CD8-positive, alpha-beta memory T cell (primary cell): ENCODE measurements at regions of chr22 and their contacts with region 1.

Region 1: GRCh38 chr22:23178512-23179254 is 1.6 kb upstream of the BCR start:
- DNase-seq: peak; percentile 55 to 74 (median 59)
- H3K4me3 ChIP-seq: no peak overlapping the region
- H3K4me3 Mint-ChIP-seq: peak overlapping the region; percentile 22 to 97 (median 82)
- H3K27ac ChIP-seq: peak overlapping the region; percentile 82
- H3K27ac Mint-ChIP-seq: peak overlapping the region; percentile 74 to 97 (median 90)
- H3K4me1 ChIP-seq: peaks cover 56% of the 10 kb centered on the region
- H3K4me1 Mint-ChIP-seq: peaks cover 47 to 63% (median 55%) of the 10 kb centered on the region in 3 donors
- H3K27me3 ChIP-seq: no peaks in the 10 kb centered on the region
- H3K27me3 Mint-ChIP-seq: peaks cover 0 to 2% of the 10 kb centered on the region in 2 donors

Region 2: DNA sequence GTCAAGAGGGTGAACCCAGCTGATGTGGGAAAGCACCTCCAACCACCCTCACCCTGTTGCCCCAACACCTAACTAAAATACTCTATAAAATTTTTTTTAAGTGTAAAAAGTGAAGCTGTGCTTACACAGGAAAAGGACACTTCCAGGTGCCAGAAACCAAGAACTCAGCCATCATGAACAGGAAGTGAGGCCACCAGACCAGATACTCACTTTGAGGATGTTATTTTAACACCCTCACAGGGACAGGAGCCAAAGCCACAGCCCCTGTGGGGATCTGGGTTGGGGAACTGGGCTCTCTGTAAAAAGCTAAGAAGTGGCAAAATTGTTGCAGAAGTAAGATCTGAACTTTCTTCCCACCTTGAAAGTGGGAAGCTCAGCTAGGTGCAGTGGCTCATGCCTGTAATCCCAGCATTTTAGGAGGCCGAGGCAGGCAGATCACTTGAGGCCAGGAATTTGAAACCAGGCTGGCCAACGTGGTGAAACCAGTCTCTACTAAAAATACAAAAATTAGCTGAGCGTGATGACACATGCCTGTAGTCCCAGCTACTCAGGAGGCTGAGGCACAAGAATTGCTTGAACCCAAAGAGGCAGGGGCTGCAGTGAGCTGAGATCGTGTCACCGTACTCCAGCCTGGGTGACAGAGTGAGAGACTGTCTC is 40.6 kb before region 1 on chr22:
- CTCF ChIA-PET with region 1: interaction called, 10 read pairs
- POLR2A ChIA-PET with region 1: no interaction called
- DNase-seq: peak; percentile 44 to 88 (median 73)
- H3K4me3 ChIP-seq: no peak overlapping the region
- H3K4me3 Mint-ChIP-seq: peak overlapping the region; percentile 66 to 88 (median 75)
- H3K27ac ChIP-seq: peak overlapping the region; percentile 69
- H3K27ac Mint-ChIP-seq: peak overlapping the region; percentile 96 to 100 (median 99)
- H3K4me1 ChIP-seq: peaks cover 62% of the 10 kb centered on the region
- H3K4me1 Mint-ChIP-seq: peaks cover 64 to 77% (median 66%) of the 10 kb centered on the region in 3 donors
- H3K27me3 ChIP-seq: no peaks in the 10 kb centered on the region
- H3K27me3 Mint-ChIP-seq: peaks cover 0 to 3% of the 10 kb centered on the region in 2 donors

Region 3: GRCh38 chr22:23144932-23145873 is 33.5 kb before region 1 on chr22 and contains the start of gene RAB36:
- CTCF ChIA-PET with region 1: interaction called, 10 read pairs
- POLR2A ChIA-PET with region 1: no interaction called
- DNase-seq: peak; percentile 86 to 97 (median 91)
- H3K4me3 ChIP-seq: peak within 1 kb of the TSS; percentile 40
- H3K4me3 Mint-ChIP-seq: peak within 1 kb of the TSS; percentile 76 to 89 (median 80)
- H3K27ac ChIP-seq: peak within 1 kb of the TSS; percentile 48
- H3K27ac Mint-ChIP-seq: peak within 1 kb of the TSS; percentile 92 to 99 (median 96)
- H3K4me1 ChIP-seq: peaks cover 43% of the 10 kb centered on the region
- H3K4me1 Mint-ChIP-seq: peaks cover 41 to 60% (median 54%) of the 10 kb centered on the region in 3 donors
- H3K27me3 ChIP-seq: peaks cover 7% of the 10 kb centered on the region
- H3K27me3 Mint-ChIP-seq: peaks cover 0 to 3% of the 10 kb centered on the region in 2 donors
- total RNA-seq, gene RAB36: 0.93 to 1.5 TPM

Region 4: GRCh38 chr22:23243006-23243573 is 64.4 kb after region 1 on chr22:
- CTCF ChIA-PET with region 1: interaction called, 15 read pairs
- POLR2A ChIA-PET with region 1: interaction called, 4 read pairs
- DNase-seq: peak; percentile 47 to 83 (median 74)
- H3K4me3 ChIP-seq: peak overlapping the region; percentile 8
- H3K4me3 Mint-ChIP-seq: peak overlapping the region; percentile 12 to 82 (median 76)
- H3K27ac ChIP-seq: peak overlapping the region; percentile 52
- H3K27ac Mint-ChIP-seq: peak overlapping the region; percentile 82 to 99 (median 94)
- H3K4me1 ChIP-seq: peaks cover 60% of the 10 kb centered on the region
- H3K4me1 Mint-ChIP-seq: peaks cover 69 to 94% (median 71%) of the 10 kb centered on the region in 3 donors
- H3K27me3 ChIP-seq: no peaks in the 10 kb centered on the region
- H3K27me3 Mint-ChIP-seq: no peaks in the 10 kb centered on the region

Region 5: DNA sequence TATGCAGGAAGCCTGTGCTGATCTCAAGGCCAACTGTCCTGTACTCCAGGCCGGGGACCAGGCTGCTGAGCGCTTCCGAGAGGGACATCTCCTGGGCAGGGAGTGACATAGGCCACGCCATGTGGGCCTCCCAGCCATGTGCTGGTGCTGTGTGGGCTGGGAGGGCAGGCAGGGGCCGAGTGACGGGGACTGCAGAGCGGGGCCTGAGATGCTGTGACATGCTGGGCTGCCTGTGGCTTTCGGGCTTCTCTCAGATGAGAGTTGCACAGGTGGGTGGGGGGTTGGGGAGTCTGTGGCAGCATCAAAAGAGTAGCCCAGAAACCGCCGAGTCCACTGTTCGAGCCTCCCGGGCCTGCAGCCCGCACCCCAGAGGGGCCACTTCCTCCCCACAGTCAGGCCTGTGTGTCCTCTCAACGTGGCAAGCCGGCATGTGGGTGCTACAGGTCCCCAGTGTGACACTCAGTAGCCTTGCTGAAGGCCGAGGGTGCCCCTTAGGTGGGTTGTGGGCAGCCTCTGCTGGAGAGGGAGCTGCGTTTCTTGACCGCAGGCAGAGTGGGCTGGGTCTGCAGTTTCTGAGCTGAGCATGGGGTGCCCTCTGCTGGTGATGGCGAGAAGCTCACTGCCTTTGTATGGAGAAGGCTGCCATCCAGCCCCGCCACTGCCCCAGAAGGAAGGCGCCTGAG is 102.9 kb after region 1 on chr22:
- CTCF ChIA-PET with region 1: interaction called, 69 read pairs
- POLR2A ChIA-PET with region 1: interaction called, 12 read pairs
- DNase-seq: peak; percentile 70 to 86 (median 71)
- H3K4me3 ChIP-seq: no peak overlapping the region
- H3K4me3 Mint-ChIP-seq: peak overlapping the region in 1 of 7 donors; percentile 63
- H3K27ac ChIP-seq: peak overlapping the region; percentile 17
- H3K27ac Mint-ChIP-seq: peak overlapping the region; percentile 14 to 84 (median 66)
- H3K4me1 ChIP-seq: peaks cover 16% of the 10 kb centered on the region
- H3K4me1 Mint-ChIP-seq: peaks cover 25 to 43% (median 28%) of the 10 kb centered on the region in 3 donors
- H3K27me3 ChIP-seq: no peaks in the 10 kb centered on the region
- H3K27me3 Mint-ChIP-seq: peaks cover 0 to 1% of the 10 kb centered on the region in 2 donors

Region 6: GRCh38 chr22:23289851-23290724 is 111.4 kb after region 1 on chr22:
- CTCF ChIA-PET with region 1: interaction called, 20 read pairs
- POLR2A ChIA-PET with region 1: no interaction called
- DNase-seq: peak; percentile 36 to 67 (median 45)
- H3K4me3 ChIP-seq: no peak overlapping the region
- H3K4me3 Mint-ChIP-seq: no peak overlapping the region
- H3K27ac ChIP-seq: no peak overlapping the region
- H3K27ac Mint-ChIP-seq: peak overlapping the region in 4 of 8 donors; percentile 29 to 64 (median 36)
- H3K4me1 ChIP-seq: no peaks in the 10 kb centered on the region
- H3K4me1 Mint-ChIP-seq: peaks cover 0 to 4% (median 0%) of the 10 kb centered on the region in 3 donors
- H3K27me3 ChIP-seq: no peaks in the 10 kb centered on the region
- H3K27me3 Mint-ChIP-seq: no peaks in the 10 kb centered on the region

Region 7: DNA sequence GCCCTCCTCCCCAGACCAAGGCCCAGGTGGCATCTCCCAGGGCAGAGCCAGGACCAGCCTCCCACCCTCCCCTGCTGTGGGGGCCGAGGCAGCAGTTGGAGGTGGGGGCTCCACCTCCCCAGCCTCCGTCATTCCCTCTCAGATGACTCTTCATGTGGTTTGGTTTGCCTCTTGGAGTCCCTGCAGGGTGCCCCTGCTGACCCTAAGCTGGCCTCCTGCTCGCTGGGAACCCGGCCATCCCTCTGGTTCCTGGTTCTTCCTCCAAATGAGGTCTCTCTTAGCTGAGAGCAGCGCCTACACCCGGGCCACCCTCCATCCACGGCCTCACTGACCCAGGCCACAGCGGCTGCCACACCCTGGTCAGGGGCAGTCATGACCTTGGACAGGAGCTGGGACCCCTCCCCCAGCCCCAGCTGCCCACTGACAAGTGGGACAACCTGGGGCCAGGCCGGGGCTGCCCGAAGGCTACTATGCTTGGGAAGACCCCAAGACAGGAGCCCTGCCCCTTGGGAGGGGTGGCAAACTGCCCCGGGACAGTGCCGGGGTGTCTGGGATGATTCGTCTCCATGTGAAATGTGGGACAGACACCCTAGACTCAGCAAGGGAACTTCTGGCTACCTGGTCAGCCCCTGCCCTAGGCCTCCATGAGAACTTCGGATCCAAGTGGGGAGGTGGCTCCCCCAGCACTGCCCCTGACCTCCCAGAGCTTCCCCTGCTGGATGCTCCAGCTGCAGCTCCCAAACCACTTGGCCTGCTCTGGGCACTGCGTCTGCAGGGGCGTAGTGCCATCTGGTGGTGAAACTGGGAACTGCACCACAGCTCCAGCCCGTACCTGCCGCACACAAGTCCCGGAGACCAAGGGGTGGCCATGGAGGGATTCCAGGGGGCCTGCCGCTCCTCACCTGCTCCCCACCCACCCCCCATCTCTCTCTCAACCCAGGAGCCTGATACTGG is 206.9 kb after region 1 on chr22:
- CTCF ChIA-PET with region 1: interaction called, 21 read pairs
- POLR2A ChIA-PET with region 1: no interaction called
- DNase-seq: peak; percentile 60 to 81 (median 69)
- H3K4me3 ChIP-seq: no peak overlapping the region
- H3K4me3 Mint-ChIP-seq: no peak overlapping the region
- H3K27ac ChIP-seq: no peak overlapping the region
- H3K27ac Mint-ChIP-seq: peak overlapping the region in 1 of 8 donors; percentile 51
- H3K4me1 ChIP-seq: no peaks in the 10 kb centered on the region
- H3K4me1 Mint-ChIP-seq: no peaks in the 10 kb centered on the region
- H3K27me3 ChIP-seq: no peaks in the 10 kb centered on the region
- H3K27me3 Mint-ChIP-seq: peaks cover 1 to 8% of the 10 kb centered on the region in 2 donors